ENCODE measurements at regions of chr3 and their contacts with region 1.

Region 1: DNA sequence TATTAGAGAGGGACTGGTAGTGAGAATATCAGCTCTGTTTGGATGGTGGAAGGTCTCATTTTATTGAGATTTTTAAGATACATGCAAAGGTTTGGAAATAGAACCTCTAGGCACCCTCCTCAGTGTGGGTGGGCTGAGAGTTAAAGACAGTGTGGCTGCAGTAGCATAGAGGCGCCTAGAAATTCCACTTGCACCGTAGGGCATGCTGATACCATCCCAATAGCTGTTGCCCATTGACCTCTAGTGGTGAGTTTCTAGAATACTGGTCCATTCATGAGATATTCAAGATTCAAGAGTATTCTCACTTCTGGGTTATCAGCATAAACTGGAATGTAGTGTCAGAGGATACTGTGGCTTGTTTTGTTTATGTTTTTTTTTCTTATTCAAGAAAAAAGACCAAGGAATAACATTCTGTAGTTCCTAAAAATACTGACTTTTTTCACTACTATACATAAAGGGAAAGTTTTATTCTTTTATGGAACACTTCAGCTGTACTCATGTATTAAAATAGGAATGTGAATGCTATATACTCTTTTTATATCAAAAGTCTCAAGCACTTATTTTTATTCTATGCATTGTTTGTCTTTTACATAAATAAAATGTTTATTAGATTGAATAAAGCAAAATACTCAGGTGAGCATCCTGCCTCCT is 87.2 kb downstream of the TGFBR2 start:
- DNase-seq: no peak
- ATAC-seq: peak; percentile 87
- H3K4me3 ChIP-seq: no peak overlapping the region
- H3K27ac ChIP-seq: no peak overlapping the region
- H3K4me1 ChIP-seq: peaks cover 4 to 15% of the 10 kb centered on the region in 2 donors
- H3K27me3 ChIP-seq: no peaks in the 10 kb centered on the region

Region 2: DNA sequence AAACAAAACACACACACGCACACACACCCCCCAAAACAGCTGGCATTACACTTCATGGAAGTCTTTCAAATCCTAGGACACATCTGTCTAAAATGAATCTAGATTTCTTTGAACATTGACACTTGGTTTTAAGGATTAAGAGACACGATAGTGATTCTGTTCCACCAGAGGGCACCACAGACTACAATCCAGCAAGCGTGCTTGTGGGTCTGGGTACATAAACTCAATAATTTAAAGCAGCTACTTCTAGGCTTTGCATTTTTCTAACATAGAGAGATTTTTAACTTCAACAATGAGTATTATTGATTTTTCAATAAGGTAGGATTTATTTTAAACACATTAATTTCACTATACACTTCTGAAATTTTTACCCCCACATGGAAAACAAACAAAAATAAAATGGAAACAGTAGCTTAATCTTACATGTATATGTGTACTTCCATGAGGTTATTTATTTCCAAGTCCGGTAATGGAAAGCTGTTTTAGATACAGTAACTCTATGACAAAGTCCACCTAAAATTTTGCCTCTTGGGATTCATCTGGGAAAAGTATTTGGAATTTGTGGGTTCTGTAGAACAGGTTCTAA is 651.2 kb before region 1 on chr3:
- intact Hi-C with region 1: loop called (anchors 5 to 10 kb)
- DNase-seq: peak in 1 of 2 donors; percentile 60
- ATAC-seq: peak; percentile 71
- H3K4me3 ChIP-seq: no peak overlapping the region
- H3K27ac ChIP-seq: no peak overlapping the region
- H3K4me1 ChIP-seq: no peaks in the 10 kb centered on the region
- H3K27me3 ChIP-seq: no peaks in the 10 kb centered on the region

Region 3: DNA sequence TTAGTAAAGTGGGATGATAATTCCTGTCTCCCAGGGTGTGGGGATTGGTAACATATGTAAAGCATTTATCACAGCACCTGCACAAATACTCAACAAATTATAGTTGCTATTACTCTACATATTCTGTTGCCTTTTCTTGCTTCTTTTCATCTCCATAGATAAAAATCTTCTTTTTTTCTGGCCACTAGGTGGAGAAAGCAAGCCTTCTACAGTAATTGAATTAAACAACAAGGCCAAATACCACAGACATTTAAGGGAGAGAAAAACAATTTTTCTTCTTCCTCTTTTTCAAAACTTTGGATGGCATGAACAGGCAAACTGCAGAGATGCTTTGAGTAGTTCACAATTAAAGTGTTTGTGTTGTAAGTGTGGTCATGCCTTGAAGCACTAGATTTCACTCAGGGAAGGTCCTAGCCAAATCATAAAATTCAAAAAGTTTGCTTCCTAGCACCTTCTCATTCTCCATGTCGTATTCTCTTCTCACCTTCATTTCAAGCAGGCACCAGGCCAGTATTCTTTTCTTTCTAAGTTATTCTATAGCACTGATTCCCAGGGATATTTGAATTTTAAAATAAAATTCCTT is 580.6 kb before region 1 on chr3:
- intact Hi-C with region 1: loop called (anchors 2 kb)
- DNase-seq: no peak
- ATAC-seq: no peak
- H3K4me3 ChIP-seq: no peak overlapping the region
- H3K27ac ChIP-seq: no peak overlapping the region
- H3K4me1 ChIP-seq: peaks cover 0 to 2% of the 10 kb centered on the region in 2 donors
- H3K27me3 ChIP-seq: no peaks in the 10 kb centered on the region

Region 4: DNA sequence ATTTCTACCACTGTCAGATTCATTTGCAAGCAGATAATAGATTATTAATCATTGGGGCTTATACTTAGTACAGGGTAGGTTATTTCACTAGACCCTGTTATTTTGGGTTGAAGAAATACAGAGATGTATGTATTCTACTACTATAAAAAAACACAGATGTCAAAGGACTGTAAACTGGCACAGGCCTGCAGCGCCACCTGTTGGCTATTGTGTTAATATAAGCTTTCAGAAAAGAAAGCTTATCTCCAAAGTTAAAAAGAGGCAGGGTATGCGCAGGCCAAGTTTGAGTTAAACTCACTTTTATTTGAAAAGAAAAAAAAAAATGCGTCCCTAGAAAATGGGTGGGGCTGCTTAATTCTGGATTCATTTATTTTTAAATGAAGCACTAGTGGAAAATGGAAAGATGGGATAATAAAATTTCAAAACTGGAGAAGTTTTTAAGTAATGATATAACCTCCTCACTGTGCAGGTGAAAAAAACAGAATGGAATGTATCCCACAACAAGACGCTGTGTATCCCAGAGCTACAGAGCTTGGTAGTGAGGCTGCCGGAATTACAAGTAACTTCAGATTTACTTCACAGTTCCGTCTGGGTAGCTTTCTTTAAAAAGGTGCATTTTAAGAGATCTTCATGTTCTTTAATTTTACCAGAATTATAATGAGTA is 494.4 kb before region 1 on chr3:
- intact Hi-C with region 1: loop called in 1 of 2 experiments (anchors 10 kb)
- DNase-seq: peak; percentile 79 to 91
- ATAC-seq: peak; percentile 86
- H3K4me3 ChIP-seq: no peak overlapping the region
- H3K27ac ChIP-seq: no peak overlapping the region
- H3K4me1 ChIP-seq: peaks cover 0 to 4% of the 10 kb centered on the region in 2 donors
- H3K27me3 ChIP-seq: no peaks in the 10 kb centered on the region

Region 5: DNA sequence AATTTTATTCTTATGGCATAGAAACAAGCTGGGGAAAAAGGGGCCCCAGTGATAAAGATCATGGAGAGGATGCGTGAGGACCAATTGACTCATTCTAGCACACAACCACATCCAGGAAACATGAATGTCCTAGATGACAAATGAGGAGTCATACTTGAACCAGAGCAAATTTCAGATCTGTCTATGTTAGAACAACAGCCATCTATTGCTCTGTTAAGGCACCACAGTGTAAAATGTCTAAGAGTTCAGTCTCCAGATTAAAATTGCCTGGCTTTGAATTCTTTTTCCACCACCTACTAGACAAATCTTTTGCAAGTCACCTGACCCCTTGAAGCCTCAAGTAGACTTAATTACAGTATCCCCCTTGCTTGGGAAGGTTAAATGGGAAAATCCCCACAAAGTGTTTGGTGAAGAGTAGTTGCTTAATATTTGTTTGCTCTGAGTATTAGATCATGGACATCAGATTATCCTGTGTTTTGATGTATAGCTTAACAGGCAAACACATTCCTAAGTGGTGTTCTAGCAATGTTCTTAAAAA is 345.8 kb before region 1 on chr3:
- intact Hi-C with region 1: loop called in 1 of 2 experiments (anchors 10 kb)
- DNase-seq: no peak
- ATAC-seq: no peak
- H3K4me3 ChIP-seq: no peak overlapping the region
- H3K27ac ChIP-seq: no peak overlapping the region
- H3K4me1 ChIP-seq: peaks cover 1 to 14% of the 10 kb centered on the region in 2 donors
- H3K27me3 ChIP-seq: no peaks in the 10 kb centered on the region

Region 6: DNA sequence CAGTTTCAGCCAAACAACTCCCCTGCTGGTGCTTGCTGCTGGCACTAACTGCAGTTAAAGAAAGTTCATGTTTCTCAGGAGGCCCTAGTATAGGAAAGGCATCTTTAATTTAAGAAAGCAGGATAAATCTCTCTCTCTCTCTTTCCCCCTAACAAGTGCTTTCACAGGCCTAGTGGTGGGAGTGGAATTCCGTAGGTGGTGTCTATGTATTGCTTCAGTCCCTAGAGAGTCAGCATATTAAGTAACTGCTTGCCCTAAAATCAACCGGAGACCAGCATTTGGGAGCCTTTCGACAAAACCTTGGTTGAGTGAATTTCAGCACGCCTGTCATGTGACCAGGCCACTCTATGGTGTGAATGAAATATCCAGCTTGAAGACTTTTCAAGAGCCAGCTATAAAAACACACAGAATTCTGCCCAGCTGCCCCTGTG is 256.4 kb before region 1 on chr3:
- intact Hi-C with region 1: loop called in 1 of 2 experiments (anchors 10 kb)
- DNase-seq: peak in 1 of 2 donors; percentile 45
- ATAC-seq: peak; percentile 73
- H3K4me3 ChIP-seq: no peak overlapping the region
- H3K27ac ChIP-seq: peak overlapping the region; percentile 43 to 88
- H3K4me1 ChIP-seq: peaks cover 8 to 12% of the 10 kb centered on the region in 2 donors
- H3K27me3 ChIP-seq: no peaks in the 10 kb centered on the region

Region 7: DNA sequence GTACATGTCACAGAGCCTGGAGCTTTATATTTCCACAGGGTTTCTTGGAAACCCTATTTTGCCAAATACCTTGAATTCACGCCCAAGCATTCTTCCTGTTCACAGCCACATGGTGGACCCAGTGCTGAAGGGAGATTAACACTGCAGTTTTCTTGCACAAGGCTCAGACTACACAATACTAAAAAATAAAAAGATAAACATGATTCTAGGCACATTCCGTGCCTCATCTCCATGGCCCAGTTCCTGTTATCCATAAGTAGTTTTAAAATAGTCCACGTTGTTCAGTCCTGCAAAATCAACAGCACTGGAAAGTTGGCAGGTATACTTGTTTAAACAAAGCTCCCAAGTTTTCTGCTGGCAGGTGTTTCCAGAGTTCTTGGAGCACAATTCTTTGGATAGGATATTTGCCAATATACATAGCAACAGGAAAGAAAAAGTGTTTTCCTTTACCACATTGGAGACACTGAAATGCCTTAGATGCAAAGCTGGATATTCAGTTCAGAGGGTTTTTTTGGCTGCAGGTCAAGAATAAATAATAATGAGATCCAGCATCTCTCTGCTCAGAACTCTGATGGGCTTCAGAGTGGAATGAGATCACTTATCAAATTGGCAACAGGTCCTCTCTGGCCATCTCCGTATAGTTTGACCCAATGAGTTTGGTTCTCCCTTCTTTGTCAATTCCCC is 175.3 kb before region 1 on chr3:
- intact Hi-C with region 1: loop called (anchors 5 kb)
- DNase-seq: peak in 1 of 2 donors; percentile 56
- ATAC-seq: peak; percentile 92
- H3K4me3 ChIP-seq: no peak overlapping the region
- H3K27ac ChIP-seq: peak overlapping the region; percentile 67 to 80
- H3K4me1 ChIP-seq: peaks cover 2 to 20% of the 10 kb centered on the region in 2 donors
- H3K27me3 ChIP-seq: no peaks in the 10 kb centered on the region

Region 8: DNA sequence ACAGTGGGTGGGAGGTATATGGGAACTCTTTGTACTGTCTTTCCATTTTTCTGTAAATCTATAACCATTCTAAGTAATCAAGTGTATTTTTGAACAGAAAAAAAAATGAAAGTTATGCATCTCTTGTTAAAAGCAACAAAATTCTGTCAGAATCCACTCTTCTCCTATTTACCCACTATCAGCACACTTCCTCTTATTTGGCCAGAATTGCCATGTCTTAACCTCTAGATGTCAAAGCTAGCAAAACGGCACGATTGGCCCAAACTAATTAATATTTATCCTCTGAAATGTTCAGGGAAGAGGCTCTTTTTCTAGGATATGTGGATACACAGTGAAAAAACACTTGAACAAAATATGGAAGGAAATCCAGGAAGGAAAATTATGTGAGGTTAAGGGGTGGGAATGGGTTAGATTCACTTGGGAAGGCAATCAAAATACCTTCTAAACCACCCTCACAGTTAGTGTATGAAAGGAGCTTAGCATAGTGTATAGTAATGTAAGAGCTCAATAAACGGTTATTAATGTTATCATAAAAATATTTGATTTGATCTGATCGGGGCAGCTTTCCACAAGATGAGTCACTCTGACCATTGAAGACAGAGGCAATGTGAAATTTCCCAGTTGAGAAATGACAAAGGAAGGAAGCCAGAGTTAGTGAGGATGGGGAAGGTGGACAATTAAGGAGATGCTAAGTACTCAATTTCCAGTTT is 107.3 kb before region 1 on chr3:
- intact Hi-C with region 1: no loop called
- DNase-seq: no peak
- ATAC-seq: no peak
- H3K4me3 ChIP-seq: no peak overlapping the region
- H3K27ac ChIP-seq: no peak overlapping the region
- H3K4me1 ChIP-seq: no peaks in the 10 kb centered on the region
- H3K27me3 ChIP-seq: no peaks in the 10 kb centered on the region